ENCODE measurements at regions of chr7 and their contacts with region 1.

Region 1: GRCh38 chr7:142478479-142479072 is 220.7 kb upstream of the PRSS58 start:
- DNase-seq: peak; percentile 55
- H3K4me3 Mint-ChIP-seq: no peak overlapping the region
- H3K27ac Mint-ChIP-seq: peak overlapping the region; percentile 21
- H3K4me1 Mint-ChIP-seq: peaks cover 81% of the 10 kb centered on the region
- H3K27me3 Mint-ChIP-seq: no peaks in the 10 kb centered on the region

Region 2: GRCh38 chr7:142263598-142264380 is 214.8 kb before region 1 on chr7:
- CTCF ChIA-PET with region 1: no interaction called
- intact Hi-C with region 1: no loop called
- DNase-seq: no peak
- H3K4me3 Mint-ChIP-seq: no peak overlapping the region
- H3K27ac Mint-ChIP-seq: no peak overlapping the region
- H3K4me1 Mint-ChIP-seq: no peaks in the 10 kb centered on the region
- H3K27me3 Mint-ChIP-seq: peaks cover 2% of the 10 kb centered on the region

Region 3: GRCh38 chr7:142352543-142352942 is 126.0 kb before region 1 on chr7:
- CTCF ChIA-PET with region 1: interaction called, 10 read pairs
- intact Hi-C with region 1: no loop called
- DNase-seq: peak; percentile 52
- H3K4me3 Mint-ChIP-seq: peak overlapping the region; percentile 74
- H3K27ac Mint-ChIP-seq: peak overlapping the region; percentile 73
- H3K4me1 Mint-ChIP-seq: peaks cover 30% of the 10 kb centered on the region
- H3K27me3 Mint-ChIP-seq: no peaks in the 10 kb centered on the region

Region 4: GRCh38 chr7:142385491-142386340 is 92.9 kb before region 1 on chr7:
- CTCF ChIA-PET with region 1: interaction called, 15 read pairs
- intact Hi-C with region 1: loop called (anchors 1 kb)
- DNase-seq: peak; percentile 76
- H3K4me3 Mint-ChIP-seq: peak overlapping the region; percentile 32
- H3K27ac Mint-ChIP-seq: peak overlapping the region; percentile 84
- H3K4me1 Mint-ChIP-seq: peaks cover 26% of the 10 kb centered on the region
- H3K27me3 Mint-ChIP-seq: no peaks in the 10 kb centered on the region

Region 5: GRCh38 chr7:142412551-142413193 is 65.9 kb before region 1 on chr7:
- CTCF ChIA-PET with region 1: interaction called, 7 read pairs
- intact Hi-C with region 1: loop called (anchors 1 kb)
- DNase-seq: peak; percentile 67
- H3K4me3 Mint-ChIP-seq: no peak overlapping the region
- H3K27ac Mint-ChIP-seq: no peak overlapping the region
- H3K4me1 Mint-ChIP-seq: peaks cover 2% of the 10 kb centered on the region
- H3K27me3 Mint-ChIP-seq: no peaks in the 10 kb centered on the region

Region 6: DNA sequence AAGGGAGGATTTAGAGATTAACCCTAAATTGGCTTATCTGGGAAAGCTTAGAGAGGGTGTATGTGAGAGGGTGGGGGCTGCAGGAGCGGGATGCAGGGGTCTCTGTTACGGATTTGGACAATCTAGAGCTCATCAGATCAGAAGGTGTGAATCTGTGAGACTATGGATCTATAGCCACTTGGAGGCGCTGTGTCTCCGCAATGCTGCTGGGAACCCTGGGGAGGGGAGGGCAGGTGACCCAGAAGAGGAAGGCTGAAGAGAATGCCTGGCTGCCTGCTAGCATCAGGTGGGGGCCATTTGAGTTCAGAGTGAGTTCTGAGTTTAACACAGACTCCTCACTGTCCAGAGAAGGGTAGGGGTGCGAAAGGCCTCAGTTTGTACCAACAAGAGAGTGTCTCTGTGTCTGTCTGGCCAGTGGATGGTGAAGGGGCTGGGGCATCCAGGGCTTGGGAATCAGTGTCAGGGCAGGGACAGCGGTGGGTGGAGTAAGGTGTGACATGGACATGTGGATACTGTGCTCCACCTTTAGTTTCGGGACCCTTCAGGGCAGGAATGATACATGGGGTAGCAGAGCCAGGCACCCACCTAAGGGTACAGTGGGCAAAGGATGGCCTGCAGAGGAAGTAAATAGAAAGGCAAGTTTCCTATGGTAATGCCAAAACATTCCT is 33.4 kb before region 1 on chr7:
- CTCF ChIA-PET with region 1: interaction called, 11 read pairs
- intact Hi-C with region 1: loop called (anchors 1 kb)
- DNase-seq: peak; percentile 72
- H3K4me3 Mint-ChIP-seq: no peak overlapping the region
- H3K27ac Mint-ChIP-seq: peak overlapping the region; percentile 70
- H3K4me1 Mint-ChIP-seq: peaks cover 33% of the 10 kb centered on the region
- H3K27me3 Mint-ChIP-seq: no peaks in the 10 kb centered on the region

Region 7: DNA sequence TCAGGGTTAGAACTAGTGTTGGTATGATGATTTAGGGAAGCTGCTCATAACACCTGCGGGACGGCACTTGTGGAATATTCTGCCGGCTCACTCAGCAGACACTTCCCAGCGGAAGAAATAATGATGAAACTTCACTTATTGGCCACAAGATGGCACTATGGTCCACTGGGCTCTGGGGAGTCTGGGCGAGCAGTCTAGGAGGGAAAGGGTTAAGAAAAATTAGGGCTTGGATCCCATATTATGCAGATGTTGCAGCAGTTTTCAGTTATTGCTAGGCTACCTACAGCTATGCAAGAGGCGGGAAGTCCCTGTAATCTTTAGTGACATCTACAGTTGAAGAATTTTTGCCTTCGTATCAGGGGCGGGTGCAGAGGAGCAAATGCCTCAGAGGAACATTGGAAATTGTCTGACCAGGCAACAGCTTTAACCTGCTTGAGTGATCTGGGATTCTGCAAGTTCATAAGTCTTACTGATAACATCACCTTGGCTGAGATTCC is 18.0 kb after region 1 on chr7:
- CTCF ChIA-PET with region 1: interaction called, 12 read pairs
- intact Hi-C with region 1: no loop called
- DNase-seq: peak; percentile 40
- H3K4me3 Mint-ChIP-seq: peak overlapping the region; percentile 29
- H3K27ac Mint-ChIP-seq: peak overlapping the region; percentile 52
- H3K4me1 Mint-ChIP-seq: peaks cover 70% of the 10 kb centered on the region
- H3K27me3 Mint-ChIP-seq: no peaks in the 10 kb centered on the region